PC-3 (cell line): ENCODE measurements at regions of chr9 and their contacts with region 1.

Region 1: GRCh38 chr9:131046581-131047202 is 37.7 kb downstream of the LAMC3 start:
- DNase-seq: peak; percentile 69
- ATAC-seq: peak; percentile 89
- H3K4me3 ChIP-seq: no peak overlapping the region
- H3K27ac ChIP-seq: no peak overlapping the region
- H3K4me1 ChIP-seq: no peaks in the 10 kb centered on the region
- H3K27me3 ChIP-seq: no peaks in the 10 kb centered on the region
- CTCF ChIP-seq: peak; percentile 83

Region 2: DNA sequence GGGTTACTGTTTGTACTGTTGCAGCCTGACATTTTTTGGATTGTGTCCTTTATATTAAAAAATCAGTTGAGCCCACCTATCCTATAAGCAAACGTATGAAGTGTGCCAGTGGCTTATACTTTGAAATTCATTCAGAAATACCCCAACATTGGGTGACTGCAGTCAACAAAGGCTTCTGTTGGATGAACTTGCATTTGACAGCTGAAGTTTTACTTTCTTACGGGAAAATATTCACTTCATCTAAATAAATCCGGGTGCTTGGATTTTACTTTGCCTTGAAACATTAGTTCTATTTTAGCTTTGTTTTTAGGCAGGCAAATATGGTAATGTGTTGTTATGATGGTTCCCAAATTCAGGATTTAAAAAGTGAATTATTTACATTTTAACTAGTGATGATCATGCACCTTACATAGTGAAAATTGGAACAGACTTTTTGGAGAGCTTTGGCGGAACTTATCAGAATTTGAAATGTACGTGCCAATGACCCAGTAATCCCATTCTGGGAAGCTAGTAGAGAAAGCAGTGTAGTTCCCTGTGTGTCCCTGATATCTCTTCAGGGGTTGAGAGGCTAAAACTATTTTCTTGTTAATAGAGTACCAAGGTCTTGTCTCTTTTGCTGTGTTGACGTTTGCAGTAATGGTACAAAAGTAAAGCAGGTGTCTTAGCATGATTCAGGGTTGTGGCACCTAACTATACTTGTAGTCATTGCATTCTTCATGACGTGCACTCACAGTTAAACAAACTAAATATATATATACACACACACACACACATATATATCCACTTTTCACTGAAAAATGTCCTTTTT is 331.2 kb before region 1 on chr9:
- CTCF ChIA-PET with region 1: interaction called, 12 read pairs
- POLR2A ChIA-PET with region 1: no interaction called
- intact Hi-C with region 1: no loop called
- DNase-seq: peak; percentile 70
- ATAC-seq: peak; percentile 13; the same call in 1 of the 2 replicates
- H3K4me3 ChIP-seq: peak overlapping the region; percentile 74
- H3K27ac ChIP-seq: no peak overlapping the region
- H3K4me1 ChIP-seq: peaks cover 6% of the 10 kb centered on the region; the same call in 1 of the 2 replicates
- H3K27me3 ChIP-seq: no peaks in the 10 kb centered on the region
- CTCF ChIP-seq: no peak

Region 3: DNA sequence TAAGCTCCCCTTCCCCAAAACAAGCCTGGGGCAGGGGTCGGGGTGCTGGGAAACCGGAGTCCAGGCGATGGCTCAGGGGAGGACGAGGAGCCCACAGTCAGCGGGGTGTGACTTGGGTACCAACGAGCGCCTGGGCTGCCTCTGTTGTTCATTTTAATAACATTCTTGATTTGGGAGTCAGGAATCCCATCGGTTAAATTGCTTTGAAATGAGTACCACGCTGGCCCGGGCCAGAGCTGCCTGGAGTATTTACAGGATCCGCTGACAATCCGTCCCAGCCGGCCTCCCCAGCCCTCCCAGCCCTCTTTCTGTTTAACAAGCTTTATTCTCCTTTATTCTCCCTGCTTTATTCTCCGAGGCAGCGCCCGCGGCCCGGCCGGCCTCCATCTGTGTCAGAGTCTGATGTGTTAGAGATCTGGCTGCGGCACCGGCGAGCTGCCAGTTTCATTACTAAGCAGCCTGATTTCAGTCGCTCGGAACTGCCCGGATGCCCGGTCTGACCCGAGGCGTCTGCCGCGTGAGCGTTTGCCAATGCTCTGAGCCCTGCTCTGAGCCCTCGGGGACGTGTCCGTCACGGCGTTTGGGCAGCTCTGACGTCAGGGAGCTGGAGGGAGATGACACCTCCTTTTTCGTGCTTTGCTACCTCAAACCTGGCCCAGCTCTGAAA is 133.6 kb before region 1 on chr9:
- CTCF ChIA-PET with region 1: no interaction called
- POLR2A ChIA-PET with region 1: no interaction called
- intact Hi-C with region 1: no loop called
- DNase-seq: peak; percentile 75
- ATAC-seq: peak; percentile 94
- H3K4me3 ChIP-seq: peak overlapping the region; percentile 52
- H3K27ac ChIP-seq: no peak overlapping the region
- H3K4me1 ChIP-seq: peaks cover 11% of the 10 kb centered on the region
- H3K27me3 ChIP-seq: no peaks in the 10 kb centered on the region
- CTCF ChIP-seq: no peak

Region 4: DNA sequence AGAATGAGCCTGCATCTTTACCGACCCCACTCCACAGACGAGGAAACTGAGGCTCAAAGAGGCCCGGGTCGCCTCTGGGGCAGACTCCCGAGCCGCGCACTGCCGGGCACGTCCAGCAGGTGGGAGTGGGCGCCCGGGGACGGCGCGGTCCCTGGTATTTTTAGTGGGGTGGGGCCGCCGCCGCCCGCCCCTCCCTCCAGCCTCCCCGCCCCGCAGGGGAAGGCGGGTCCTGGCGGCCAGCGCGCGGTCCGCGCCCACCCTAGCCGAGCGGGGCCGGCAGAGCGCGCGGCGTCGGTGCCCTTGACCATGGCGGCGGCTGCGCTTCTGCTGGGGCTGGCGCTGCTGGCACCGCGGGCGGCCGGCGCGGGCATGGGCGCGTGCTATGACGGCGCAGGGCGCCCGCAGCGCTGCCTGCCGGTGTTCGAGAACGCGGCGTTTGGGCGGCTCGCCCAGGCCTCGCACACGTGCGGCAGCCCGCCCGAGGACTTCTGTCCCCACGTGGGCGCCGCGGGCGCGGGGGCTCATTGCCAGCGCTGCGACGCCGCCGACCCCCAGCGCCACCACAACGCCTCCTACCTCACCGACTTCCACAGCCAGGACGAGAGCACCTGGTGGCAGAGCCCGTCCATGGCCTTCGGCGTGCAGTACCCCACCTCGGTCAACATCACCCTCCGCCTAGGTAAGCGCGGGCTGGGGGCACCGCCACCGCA is 37.6 kb before region 1 on chr9 and contains the start of gene LAMC3:
- CTCF ChIA-PET with region 1: interaction called, 13 read pairs
- POLR2A ChIA-PET with region 1: no interaction called
- intact Hi-C with region 1: loop called (anchors 5 kb)
- DNase-seq: peak; percentile 17
- ATAC-seq: peak; percentile 76
- H3K4me3 ChIP-seq: peak within 1 kb of the TSS; percentile 62
- H3K27ac ChIP-seq: no peak within 1 kb of the TSS
- H3K4me1 ChIP-seq: no peaks in the 10 kb centered on the region
- H3K27me3 ChIP-seq: no peaks in the 10 kb centered on the region
- CTCF ChIP-seq: peak; percentile 39
- total RNA-seq, gene LAMC3: 4.6 and 6.0 TPM in 2 replicates

Region 5: DNA sequence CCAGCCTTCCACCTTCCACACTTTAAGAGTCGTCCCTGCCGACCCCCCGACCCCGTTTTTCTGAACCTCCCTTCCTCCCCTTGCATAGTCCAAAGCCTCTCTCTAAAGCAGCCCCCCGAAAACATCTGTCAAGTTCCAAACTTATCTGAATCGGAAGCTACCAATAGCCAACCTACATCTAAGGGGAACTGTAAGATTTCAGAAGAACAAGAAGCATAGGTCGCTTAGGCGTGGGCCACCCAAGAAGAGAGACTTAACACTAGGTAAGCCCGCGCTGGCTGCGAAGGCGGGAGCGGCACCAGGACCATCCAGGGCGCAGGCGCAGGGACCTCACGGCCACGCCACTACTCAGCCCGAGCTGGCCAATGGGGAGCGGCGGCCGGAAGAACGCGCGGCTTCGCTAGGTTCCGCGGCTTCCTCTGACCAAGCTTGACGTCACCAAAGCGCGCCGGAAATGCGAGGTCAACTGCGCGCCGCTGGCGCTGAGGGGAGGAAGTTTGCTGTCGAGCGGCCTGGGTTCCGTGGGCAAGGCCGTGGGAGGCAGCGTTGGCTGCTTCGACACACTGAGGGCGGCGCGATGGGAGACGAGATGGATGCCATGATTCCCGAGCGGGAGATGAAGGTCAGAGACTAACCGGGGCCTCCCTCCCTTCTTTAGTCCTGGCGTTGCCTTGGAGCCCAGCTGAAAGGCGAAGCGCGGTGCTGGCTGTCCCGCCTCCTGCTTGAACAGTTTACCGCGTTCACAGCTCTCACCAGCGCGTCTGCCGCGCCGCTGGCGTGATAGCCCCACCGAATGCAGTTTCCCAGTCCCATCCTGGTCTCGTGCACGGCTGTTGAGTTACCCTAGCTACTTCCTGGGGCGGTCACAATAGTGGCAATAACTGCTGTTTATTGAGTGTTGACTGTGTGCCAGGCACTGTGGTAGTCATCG is 78.7 kb after region 1 on chr9 and contains the start of gene NUP214:
- CTCF ChIA-PET with region 1: no interaction called
- POLR2A ChIA-PET with region 1: no interaction called
- intact Hi-C with region 1: loop called (anchors 10 kb)
- DNase-seq: peak; percentile 96
- ATAC-seq: peak; percentile 99
- H3K4me3 ChIP-seq: peak within 1 kb of the TSS; percentile 86
- H3K27ac ChIP-seq: peak within 1 kb of the TSS; percentile 75
- H3K4me1 ChIP-seq: peaks cover 7% of the 10 kb centered on the region
- H3K27me3 ChIP-seq: no peaks in the 10 kb centered on the region
- CTCF ChIP-seq: no peak
- total RNA-seq, gene NUP214: 22.0 and 25.6 TPM in 2 replicates

Region 6: GRCh38 chr9:131517761-131518190 is 471.1 kb after region 1 on chr9:
- CTCF ChIA-PET with region 1: no interaction called
- POLR2A ChIA-PET with region 1: no interaction called
- intact Hi-C with region 1: no loop called
- DNase-seq: no peak
- ATAC-seq: no peak
- H3K4me3 ChIP-seq: no peak overlapping the region
- H3K27ac ChIP-seq: no peak overlapping the region
- H3K4me1 ChIP-seq: no peaks in the 10 kb centered on the region
- H3K27me3 ChIP-seq: no peaks in the 10 kb centered on the region
- CTCF ChIP-seq: no peak